ENCODE measurements at regions of chr20 and their contacts with region 1.

Region 1: GRCh38 chr20:50278674-50279531 is 88.3 kb downstream of the CEBPB start:
- DNase-seq: peak; percentile 87
- ATAC-seq: peak; percentile 86

Region 2: GRCh38 chr20:50224531-50225255 is 54.2 kb before region 1 on chr20:
- intact Hi-C with region 1: loop called (anchors 2 kb)
- DNase-seq: peak; percentile 83
- ATAC-seq: peak; percentile 72

Region 3: GRCh38 chr20:50320910-50321796 is 42.2 kb after region 1 on chr20:
- intact Hi-C with region 1: no loop called
- DNase-seq: peak; percentile 92
- ATAC-seq: peak; percentile 94

Region 4: GRCh38 chr20:50346372-50347283 is 67.7 kb after region 1 on chr20:
- intact Hi-C with region 1: loop called (anchors 1 kb)
- DNase-seq: peak; percentile 92
- ATAC-seq: peak; percentile 81

Region 5: DNA sequence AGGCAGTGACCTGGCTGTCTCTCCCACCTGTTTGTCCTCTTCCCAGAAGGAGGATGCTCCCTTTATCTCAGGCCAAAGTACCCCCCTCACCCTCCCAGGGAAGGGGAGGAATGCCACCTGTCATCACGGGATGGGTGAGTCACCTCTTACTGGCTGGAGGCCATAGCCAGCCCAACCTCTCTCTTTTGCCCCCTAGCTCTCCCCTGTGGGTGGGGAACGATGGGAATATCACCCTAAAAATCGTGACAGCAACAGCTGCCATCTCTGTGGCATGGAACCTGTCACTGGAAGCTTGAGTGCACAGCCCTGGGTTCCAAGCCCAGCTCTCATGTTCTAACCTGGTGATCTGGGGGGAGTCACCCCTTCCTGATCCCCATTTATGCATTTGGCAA is 93.9 kb after region 1 on chr20:
- intact Hi-C with region 1: no loop called
- DNase-seq: no peak
- ATAC-seq: no peak

Region 6: DNA sequence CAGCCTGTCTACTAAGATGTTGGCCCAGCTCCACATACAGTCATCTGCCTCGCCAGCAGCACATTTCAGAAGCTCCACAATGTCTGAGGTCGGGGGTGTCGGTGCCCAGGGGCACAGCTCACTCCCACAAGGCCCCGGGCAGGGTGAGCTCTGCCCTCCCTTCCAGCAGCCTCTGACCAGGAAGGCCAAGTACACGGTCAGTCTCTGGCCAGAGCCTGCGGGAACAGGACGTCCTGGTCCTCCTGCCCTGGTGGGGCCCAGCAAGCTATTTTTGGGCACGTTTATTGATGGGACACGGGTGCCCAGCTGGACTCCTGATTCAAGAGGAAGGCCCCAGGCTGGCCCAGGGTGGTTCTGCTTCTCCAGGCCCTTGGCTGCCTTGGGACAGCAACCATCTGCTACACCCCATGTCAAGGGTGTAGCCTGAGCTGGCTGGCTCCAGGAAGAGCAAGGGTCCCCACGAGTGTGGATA is 116.4 kb after region 1 on chr20:
- intact Hi-C with region 1: loop called (anchors 5 kb)
- DNase-seq: peak; percentile 91
- ATAC-seq: peak; percentile 84

Region 7: DNA sequence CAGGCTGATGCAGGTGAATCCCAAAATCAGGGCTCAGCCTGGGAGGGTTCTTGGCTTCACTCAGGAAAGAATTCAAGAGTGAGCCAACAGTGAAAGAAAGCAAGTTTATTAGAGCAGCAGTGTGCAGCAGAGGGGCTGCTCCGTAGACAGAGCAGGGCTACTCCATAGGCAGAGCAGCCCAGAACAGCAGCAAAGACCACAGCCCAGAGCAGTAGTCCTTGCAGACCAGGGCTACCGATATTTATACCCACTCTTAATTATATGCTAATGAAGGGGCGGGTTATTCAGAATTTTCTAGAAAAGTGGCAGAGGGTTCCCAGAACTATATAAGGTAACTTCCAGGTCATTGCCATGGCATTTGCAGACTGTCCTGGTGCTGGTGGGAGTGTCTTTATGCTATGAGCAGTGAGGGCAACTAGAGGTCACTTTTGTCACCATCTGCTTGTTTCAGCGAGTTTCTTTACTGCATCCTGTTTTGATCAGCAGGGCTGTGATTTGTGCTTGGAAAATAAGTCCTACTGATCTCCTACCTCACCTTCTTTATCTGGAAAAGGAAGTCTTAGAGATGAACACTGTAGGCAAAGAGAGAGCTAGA is 191.5 kb after region 1 on chr20:
- intact Hi-C with region 1: no loop called
- DNase-seq: no peak
- ATAC-seq: no peak